Posterior vena cava (tissue), 2 donors: ENCODE measurements at regions of chr2 and their contacts with region 1.

Region 1: GRCh38 chr2:138028538-138028937 is 64.3 kb downstream of the HNMT start:
- DNase-seq: no peak

Region 2: GRCh38 chr2:138003411-138003810 is 25.1 kb before region 1 on chr2:
- intact Hi-C with region 1: no loop called
- DNase-seq: no peak

Region 3: DNA sequence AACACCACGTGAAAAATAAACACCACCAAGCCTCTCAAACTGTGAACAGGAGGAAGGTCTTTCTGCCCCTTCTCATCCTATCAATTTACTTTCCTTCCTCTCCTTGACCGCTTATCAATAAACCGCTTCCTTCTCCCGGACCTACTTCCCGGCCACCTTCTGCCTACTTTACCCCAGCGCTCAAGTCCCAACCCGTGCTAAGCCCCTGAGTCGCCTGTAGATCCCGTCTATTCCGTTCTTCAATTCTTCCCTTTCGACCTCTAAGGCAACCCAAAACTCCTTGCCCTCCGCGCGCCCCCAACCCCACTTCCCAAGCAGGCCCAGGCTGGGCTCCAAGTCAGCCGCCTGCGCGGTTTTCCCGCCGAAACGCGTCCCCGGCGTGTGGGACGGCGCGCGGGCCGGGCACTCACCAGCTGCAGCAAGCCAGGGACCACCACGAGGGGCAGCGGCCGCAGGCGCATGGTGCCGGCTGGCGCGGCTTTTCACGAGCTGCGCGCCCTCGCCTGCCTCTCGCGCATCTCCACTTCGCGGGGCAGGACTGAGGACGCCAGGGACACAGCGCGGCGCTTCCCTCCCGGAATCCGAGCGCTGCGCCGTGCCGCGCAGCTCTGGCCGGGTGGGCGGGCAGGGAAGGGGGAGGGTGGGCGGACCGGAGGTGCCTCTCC is 751.4 kb after region 1 on chr2 and contains the start of gene NXPH2:
- intact Hi-C with region 1: loop called in 1 of 2 experiments (anchors 5 kb)
- DNase-seq: no peak
- total RNA-seq, gene NXPH2: not detected